ENCODE measurements at regions of chr3 and their contacts with region 1.

Region 1: DNA sequence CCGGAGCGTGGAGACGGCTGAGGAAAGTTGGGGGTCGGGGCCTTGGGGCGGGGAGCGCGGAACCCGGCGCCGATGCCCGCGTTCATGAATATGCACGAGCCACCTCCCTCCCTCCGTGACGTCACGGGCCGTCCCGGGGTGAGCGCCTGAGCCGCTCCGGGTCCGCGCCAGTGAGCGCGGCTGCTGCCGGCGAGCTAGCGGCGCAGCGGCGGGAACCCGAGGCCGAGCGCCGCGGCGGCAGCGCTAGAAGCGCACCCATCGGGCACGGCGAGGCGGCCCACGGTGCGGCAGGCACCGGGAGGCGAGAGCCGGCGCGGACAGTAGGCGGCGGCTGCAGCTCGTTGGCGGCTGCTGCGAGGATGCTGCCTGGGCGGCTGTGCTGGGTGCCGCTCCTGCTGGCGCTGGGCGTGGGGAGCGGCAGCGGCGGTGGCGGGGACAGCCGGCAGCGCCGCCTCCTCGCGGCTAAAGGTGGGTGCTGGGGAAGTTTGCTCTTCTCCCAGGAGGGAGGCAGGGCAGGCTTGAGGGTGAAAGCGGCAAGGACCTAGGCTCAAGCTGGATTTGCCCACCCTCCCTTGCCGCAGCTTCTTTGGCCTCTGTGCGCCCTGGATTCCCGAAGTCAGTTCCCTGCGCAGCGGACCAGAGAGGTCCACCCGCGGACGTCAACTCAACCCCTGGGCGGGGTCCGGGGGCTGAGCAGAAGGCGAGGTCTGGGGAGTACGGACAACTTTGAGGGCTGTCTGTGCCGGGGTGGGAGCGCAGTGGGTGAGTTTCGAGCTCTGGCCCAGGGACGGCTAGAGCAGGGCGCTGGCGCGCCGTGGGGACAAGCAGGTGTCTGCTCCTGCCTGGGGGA is at the start of gene CLSTN2:
- DNase-seq: peak; percentile 79
- H3K4me3 ChIP-seq: peak within 1 kb of the TSS; percentile 21 to 57 (median 48)
- H3K27ac ChIP-seq: peak within 1 kb of the TSS in 1 of 4 donors; percentile 22
- H3K4me1 ChIP-seq: peaks cover 0 to 28% (median 22%) of the 10 kb centered on the region in 4 donors
- H3K27me3 ChIP-seq: peaks cover 0 to 31% (median 14%) of the 10 kb centered on the region in 3 donors
- CTCF ChIP-seq: no peak
- EP300 ChIP-seq: no peak
- POLR2A ChIP-seq: no peak
- total RNA-seq, gene CLSTN2: 2.7 to 8.3 (median 5.6) TPM

Region 2: DNA sequence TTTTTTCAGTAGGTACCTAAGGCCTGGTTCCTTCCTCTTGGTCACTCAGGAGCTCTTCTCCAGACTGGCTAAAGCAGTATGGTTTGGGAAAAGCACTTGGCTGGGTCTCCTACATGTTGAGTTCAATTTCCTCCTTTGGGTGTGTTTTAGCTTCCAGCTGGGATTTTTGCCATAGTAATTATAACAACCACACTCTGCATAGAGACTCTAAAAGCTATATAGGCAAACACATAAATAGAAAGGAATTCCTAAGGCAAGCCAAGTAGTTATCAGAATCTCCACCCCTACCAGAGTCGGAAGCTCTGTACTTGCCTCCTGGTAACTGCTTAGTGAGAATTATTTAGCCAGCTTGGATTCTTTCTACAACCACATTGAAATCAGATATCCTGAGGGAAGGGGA is 1036.9 kb before region 1 on chr3:
- intact Hi-C with region 1: no loop called
- DNase-seq: no peak
- H3K4me3 ChIP-seq: no peak overlapping the region
- H3K27ac ChIP-seq: no peak overlapping the region
- H3K4me1 ChIP-seq: no peaks in the 10 kb centered on the region
- H3K27me3 ChIP-seq: no peaks in the 10 kb centered on the region
- CTCF ChIP-seq: no peak
- EP300 ChIP-seq: no peak
- POLR2A ChIP-seq: no peak

Region 3: GRCh38 chr3:139434764-139435307 is 500.4 kb before region 1 on chr3:
- intact Hi-C with region 1: loop called (anchors 10 kb)
- DNase-seq: no peak
- H3K4me3 ChIP-seq: no peak overlapping the region
- H3K27ac ChIP-seq: no peak overlapping the region
- H3K4me1 ChIP-seq: no peaks in the 10 kb centered on the region
- H3K27me3 ChIP-seq: no peaks in the 10 kb centered on the region
- CTCF ChIP-seq: no peak
- EP300 ChIP-seq: no peak
- POLR2A ChIP-seq: no peak